T-cell (primary cell): ENCODE measurements at regions of chr4 and their contacts with region 1.

Region 1: GRCh38 chr4:73127839-73128453 is 58.4 kb upstream of the COX18 start:
- DNase-seq: peak in 14 of 35 experiments; percentile 0 to 42 (median 6)
- ATAC-seq: peak; percentile 66 to 89 (median 68)
- H3K4me3 ChIP-seq: no peak overlapping the region
- H3K4me3 Mint-ChIP-seq: no peak overlapping the region
- H3K27ac ChIP-seq: no peak overlapping the region
- H3K27ac Mint-ChIP-seq: peak overlapping the region in 1 of 2 donors; percentile 41
- H3K4me1 ChIP-seq: no peaks in the 10 kb centered on the region
- H3K4me1 Mint-ChIP-seq: peaks cover 0 to 6% (median 3%) of the 10 kb centered on the region in 3 donors
- H3K27me3 ChIP-seq: no peaks in the 10 kb centered on the region
- H3K27me3 Mint-ChIP-seq: no peaks in the 10 kb centered on the region

Region 2: GRCh38 chr4:72997409-72997808 is 130.5 kb before region 1 on chr4:
- CTCF ChIA-PET with region 1: no interaction called
- POLR2A ChIA-PET with region 1: interaction called in 1 of 2 experiments, 10 read pairs
- DNase-seq: no peak
- ATAC-seq: no peak
- H3K4me3 ChIP-seq: no peak overlapping the region
- H3K4me3 Mint-ChIP-seq: no peak overlapping the region
- H3K27ac ChIP-seq: no peak overlapping the region
- H3K27ac Mint-ChIP-seq: no peak overlapping the region
- H3K4me1 ChIP-seq: no peaks in the 10 kb centered on the region
- H3K4me1 Mint-ChIP-seq: no peaks in the 10 kb centered on the region
- H3K27me3 ChIP-seq: peaks cover 0 to 5% of the 10 kb centered on the region in 2 experiments
- H3K27me3 Mint-ChIP-seq: peaks cover 5 to 27% of the 10 kb centered on the region in 2 donors

Region 3: DNA sequence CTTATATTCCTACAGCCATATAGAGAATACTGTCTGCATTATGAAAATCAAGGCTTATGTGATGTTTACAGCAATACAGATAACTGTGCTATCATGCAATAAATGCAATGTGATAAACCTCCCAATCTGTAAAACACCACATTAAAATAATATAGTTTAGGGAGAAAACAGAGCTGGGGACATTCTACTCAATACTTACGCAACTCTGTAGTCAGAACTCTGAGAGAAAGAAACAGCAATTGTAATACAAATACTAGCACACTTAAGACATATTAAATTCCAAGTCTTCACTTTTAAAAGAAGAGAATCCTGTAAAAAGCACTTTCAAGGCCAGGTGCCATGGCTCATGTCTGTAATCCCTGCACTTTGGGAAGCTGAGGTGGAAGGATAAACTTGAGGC is 69.3 kb after region 1 on chr4:
- CTCF ChIA-PET with region 1: no interaction called
- POLR2A ChIA-PET with region 1: no interaction called
- DNase-seq: no peak
- ATAC-seq: no peak
- H3K4me3 ChIP-seq: no peak overlapping the region
- H3K4me3 Mint-ChIP-seq: no peak overlapping the region
- H3K27ac ChIP-seq: no peak overlapping the region
- H3K27ac Mint-ChIP-seq: no peak overlapping the region
- H3K4me1 ChIP-seq: peaks cover 0 to 2% of the 10 kb centered on the region in 2 experiments
- H3K4me1 Mint-ChIP-seq: peaks cover 37 to 52% (median 51%) of the 10 kb centered on the region in 3 donors
- H3K27me3 ChIP-seq: no peaks in the 10 kb centered on the region
- H3K27me3 Mint-ChIP-seq: no peaks in the 10 kb centered on the region